ENCODE measurements at regions of chr20 and their contacts with region 1.

Region 1: DNA sequence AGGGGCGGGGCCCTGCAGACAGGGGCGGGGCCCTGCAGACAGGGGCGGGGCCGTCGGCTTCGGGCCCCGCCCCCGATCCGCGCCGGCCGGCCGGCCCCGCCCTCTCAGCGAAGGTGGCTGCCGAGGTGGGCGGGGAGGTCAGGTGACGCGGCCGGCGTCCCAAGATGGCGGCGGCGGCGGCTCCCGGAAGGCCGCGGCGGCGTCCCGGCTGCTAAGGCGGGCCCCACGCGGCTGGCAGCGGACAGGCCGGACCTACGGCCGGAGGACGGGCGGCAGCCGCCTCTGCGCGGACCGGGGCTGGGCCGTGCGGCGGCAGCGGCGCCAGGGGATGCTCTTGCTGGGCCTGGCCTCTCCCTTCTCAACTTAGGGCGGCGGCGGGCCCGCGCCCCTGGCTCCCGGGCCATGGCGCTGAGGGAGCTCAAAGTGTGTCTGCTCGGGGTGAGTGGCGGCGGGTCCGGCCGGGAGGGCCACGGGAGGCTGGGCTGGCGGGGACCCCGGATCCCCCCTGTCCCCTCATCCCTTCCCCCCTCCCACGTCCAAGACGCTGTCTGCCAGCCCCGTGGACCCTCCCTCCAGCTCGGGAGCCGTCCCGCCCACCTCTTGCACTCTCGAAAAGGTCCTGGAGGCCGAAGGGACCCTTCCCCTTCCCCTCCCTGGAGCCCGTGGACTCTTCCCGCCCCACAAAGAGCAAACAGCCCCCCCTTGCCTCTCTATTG is at the start of gene RAB22A:
- DNase-seq: peak; percentile 95
- total RNA-seq, gene RAB22A: 9.8 TPM

Region 2: DNA sequence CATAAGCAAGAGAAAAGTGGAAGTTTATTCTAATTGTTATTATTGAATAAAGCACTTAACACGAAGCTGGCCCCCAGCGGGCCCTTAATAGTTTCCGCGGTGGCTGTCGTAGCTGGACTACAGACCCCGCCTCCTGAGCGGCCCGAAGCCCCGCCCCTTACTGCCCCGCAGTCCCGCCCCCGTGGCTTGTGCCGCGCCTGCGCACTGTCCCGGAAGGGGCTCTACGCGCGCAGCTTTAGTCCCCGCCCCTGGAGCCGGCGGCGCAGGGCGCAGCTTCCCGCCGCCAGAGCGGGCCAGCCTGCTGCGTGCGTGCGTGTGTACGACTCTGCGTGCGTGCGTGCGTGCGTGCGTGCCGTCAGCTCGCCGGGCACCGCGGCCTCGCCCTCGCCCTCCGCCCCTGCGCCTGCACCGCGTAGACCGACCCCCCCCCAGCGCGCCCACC is 79.2 kb after region 1 on chr20 and contains the start of gene VAPB:
- intact Hi-C with region 1: loop called (anchors 2 kb)
- DNase-seq: peak; percentile 99
- total RNA-seq, gene VAPB: 65.9 TPM

Measured in cardiac septum (tissue), 1 donor.